ENCODE measurements at regions of chr1 and their contacts with region 1.

Region 1: DNA sequence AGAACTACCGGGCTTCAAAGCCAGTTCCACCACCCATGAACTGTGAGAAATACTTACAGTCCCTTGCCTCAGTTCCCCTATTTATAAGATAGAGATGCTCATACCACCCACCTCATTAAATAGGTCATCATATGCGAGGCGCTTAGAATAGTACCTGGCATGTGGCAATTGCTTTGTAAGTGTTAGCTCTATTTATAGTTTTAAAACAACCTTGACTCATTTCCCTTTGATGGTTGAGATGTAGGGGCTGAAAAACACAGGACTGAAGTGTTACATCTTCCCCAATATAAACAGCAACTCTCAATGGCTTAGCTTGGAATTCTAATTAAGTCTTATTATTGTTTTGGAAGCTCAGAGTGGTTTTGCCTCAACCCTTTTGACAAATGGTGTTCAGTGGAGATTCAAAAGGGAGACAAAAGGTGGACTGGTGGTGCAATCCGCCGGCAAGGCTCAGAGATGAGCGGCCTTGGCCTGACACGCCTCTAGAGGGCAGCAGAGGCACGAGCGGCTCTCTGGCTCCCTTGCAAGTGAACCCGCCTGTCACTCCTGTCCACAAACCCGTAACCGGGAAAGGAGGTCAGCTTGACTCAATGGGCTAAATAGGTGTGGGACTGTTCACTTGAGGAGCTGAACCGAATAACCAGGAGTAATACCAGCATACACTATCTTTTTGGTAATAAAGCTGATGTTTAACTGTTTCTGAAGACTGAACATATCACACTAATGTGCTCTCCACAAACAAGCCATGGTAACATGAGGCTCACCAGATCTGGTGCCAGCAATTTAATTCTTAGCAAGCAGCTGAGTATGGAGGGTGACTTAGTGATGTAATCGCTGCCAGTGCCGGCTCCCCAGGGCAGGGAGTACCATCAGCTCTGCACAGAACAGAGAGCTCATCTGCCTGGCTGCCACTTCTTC is 19.5 kb upstream of the SMYD2 start:
- DNase-seq: peak; percentile 53 to 79
- ATAC-seq: peak; percentile 96 to 99
- H3K4me3 ChIP-seq: no peak overlapping the region
- H3K27ac ChIP-seq: 0 out of 6 replicates have a peak overlapping the region, but pooled peaks of 1 of the 2 experiments have one; percentile 39
- H3K4me1 ChIP-seq: peaks cover 13% of the 10 kb centered on the region; the same call in 2 of the 3 replicates
- CTCF ChIP-seq: peak; percentile 90
- EP300 ChIP-seq: no peak
- POLR2A ChIP-seq: no peak
- RAD21 ChIP-seq: peak; percentile 84 to 86

Region 2: DNA sequence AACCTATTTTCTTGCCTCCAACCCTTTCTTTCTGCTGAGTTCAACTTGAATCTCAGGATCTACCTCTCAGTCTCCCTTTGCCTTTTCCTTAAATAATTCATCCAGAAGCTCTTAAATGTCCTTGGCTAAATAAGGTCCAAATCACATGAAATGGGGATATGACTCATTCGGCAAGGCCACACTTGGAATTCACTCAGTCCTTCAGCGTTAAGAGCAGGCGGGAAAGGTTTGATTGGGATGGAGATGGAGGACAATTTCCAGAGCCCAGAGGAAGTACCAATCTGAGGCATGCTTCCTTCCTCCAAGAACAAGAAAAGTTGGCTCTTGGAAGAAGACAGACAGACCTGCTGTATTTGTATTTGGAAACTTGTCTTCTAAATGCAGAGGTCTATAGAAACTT is 145.2 kb before region 1 on chr1:
- CTCF ChIA-PET with region 1: no interaction called
- POLR2A ChIA-PET with region 1: no interaction called
- DNase-seq: no peak
- ATAC-seq: no peak
- H3K4me3 ChIP-seq: no peak overlapping the region
- H3K27ac ChIP-seq: no peak overlapping the region
- H3K4me1 ChIP-seq: no peaks in the 10 kb centered on the region
- CTCF ChIP-seq: no peak
- EP300 ChIP-seq: no peak
- POLR2A ChIP-seq: no peak
- RAD21 ChIP-seq: no peak

Region 3: DNA sequence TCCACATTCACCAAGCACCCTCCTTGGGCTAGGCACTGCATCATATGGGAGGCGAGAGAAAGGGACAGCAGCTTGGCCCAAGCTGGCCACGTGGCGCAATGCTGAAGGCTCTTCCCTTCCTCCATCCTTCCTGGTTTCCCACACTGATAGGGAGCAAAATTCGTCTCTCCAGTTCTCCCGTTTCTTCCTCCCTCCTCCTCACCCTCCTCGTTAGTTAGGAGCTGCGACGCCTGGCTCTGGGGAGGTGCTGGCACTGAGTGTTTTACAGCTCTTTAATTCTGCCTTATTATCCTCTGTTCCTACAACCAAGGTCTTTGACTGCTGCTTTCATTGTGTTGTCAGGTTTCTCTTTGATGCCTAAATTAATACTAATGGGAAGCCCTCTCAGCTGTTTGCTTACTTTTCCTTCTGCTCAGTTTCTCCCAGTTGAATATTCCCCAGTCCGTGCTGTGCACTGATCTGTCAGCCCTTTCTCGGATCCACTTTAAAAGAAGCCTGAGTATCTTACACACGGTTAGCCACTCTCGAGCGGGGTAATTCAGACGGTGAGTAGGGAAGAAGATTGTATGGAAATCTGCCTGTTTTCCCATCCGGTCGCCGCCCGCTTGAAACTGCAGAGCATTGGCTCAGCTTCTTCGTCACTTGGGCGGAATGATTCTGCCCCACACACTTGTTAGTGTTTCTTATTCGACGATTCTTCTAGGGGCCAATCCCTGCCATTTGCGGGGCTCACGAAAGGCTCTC is 36.7 kb before region 1 on chr1:
- CTCF ChIA-PET with region 1: interaction called, 30 read pairs
- POLR2A ChIA-PET with region 1: no interaction called
- DNase-seq: no peak
- ATAC-seq: no peak
- H3K4me3 ChIP-seq: no peak overlapping the region
- H3K27ac ChIP-seq: no peak overlapping the region
- H3K4me1 ChIP-seq: peaks cover 12% of the 10 kb centered on the region
- CTCF ChIP-seq: no peak
- EP300 ChIP-seq: no peak
- POLR2A ChIP-seq: no peak
- RAD21 ChIP-seq: no peak

Region 4: GRCh38 chr1:214281021-214281719 is 19.7 kb after region 1 on chr1 and contains the start of gene SMYD2:
- CTCF ChIA-PET with region 1: interaction called, 70 read pairs
- POLR2A ChIA-PET with region 1: no interaction called
- DNase-seq: peak; percentile 53 to 66
- ATAC-seq: peak; percentile 83 to 86
- H3K4me3 ChIP-seq: peak within 1 kb of the TSS; percentile 90
- H3K27ac ChIP-seq: peak within 1 kb of the TSS; percentile 98 to 99
- H3K4me1 ChIP-seq: peaks cover 22% of the 10 kb centered on the region
- CTCF ChIP-seq: no peak
- EP300 ChIP-seq: no peak
- POLR2A ChIP-seq: peak; percentile 36
- RAD21 ChIP-seq: no peak
- polyA plus RNA-seq, gene SMYD2: 54.9 and 57.7 TPM in 2 replicates

Region 5: DNA sequence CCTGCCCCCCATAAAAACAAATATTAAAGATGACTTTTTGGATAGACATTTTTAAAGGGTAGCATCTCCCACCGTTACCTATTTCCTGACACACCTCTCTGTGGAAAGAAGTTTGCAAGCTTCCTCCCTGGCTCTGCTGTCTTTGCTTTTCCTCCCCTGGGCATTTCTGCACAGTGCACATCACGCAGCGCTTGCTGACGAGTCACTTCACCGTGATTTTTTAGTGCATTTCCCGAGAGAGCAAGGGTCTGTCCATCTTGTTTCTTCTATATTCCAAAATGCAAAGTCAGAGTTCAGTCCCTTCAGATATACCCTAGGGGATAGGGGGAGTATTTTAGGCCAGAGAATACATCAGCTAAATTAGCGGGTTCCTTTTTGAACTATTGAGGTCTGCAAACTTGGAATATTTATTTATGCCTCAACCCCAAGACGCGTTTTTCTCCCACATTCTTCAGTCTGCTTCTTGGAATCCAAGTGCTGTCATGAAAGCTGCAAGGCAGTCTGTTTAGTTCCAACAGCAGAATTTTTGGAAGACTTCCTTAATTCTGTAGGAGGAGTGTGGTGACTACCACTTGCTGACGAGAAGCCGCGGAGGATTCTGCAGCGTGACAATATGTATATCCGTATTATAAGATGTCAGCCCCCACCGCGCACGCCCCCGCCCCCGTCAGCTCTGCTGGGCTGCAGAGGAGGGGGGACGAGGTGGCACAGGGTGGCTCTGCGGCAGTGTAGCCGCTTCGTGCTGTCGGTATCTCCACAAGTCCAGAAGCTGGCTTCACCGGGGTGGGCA is 41.9 kb after region 1 on chr1:
- CTCF ChIA-PET with region 1: interaction called, 16 read pairs
- POLR2A ChIA-PET with region 1: no interaction called
- DNase-seq: no peak
- ATAC-seq: no peak
- H3K4me3 ChIP-seq: no peak overlapping the region
- H3K27ac ChIP-seq: no peak overlapping the region
- H3K4me1 ChIP-seq: no peaks in the 10 kb centered on the region
- CTCF ChIP-seq: no peak
- EP300 ChIP-seq: no peak
- POLR2A ChIP-seq: no peak
- RAD21 ChIP-seq: no peak

Region 6: DNA sequence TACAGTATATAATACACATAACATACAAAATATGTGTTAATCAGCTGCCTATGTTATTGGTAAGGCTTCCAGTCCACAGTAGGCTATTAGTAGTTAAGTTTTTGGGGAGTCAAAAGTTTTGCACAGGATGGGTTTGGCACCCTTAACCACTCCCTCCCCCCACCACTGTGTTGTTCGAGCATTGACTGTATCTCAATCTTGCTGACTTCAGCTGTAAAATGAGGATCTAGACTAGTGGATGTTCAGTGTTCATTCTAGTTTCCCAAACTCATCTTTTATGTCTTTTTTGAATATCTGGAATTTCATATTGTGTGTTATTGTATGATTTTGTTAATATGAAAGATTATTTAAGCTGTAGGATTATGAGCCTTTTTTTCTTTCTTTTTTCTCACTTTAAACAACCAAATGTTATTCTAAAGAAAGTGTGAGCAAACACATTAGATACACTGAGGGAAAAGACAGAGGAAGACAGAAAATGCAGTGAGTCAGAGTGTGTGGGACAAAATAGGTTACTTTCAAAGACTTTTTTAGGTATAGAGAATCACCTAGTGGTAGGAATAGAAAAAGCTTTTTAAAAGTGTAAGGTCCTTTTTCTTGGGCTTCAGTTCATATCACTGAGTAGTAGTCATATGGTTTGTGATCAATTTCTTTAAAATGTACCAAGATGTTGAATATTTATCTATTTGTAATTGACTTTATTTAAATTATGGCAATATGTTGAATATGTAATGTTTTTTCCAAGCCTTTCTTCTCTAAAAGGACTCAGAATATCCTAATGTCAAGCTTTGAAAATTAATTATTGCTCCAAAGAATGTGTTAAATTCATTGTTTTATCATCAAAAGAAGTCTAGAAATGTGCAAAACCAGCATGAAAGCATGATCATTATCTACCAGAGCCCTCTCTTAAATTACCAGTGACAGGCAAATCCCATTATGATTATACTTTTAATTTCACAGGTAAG is 323.6 kb after region 1 on chr1:
- CTCF ChIA-PET with region 1: interaction called, 10 read pairs
- POLR2A ChIA-PET with region 1: no interaction called
- DNase-seq: peak; percentile 41 to 58
- ATAC-seq: peak; percentile 83 to 89
- H3K4me3 ChIP-seq: no peak overlapping the region
- H3K27ac ChIP-seq: peak overlapping the region; percentile 31 to 74; a peak in 4 of 6 replicates
- H3K4me1 ChIP-seq: peaks cover 38% of the 10 kb centered on the region
- CTCF ChIP-seq: peak; percentile 97
- EP300 ChIP-seq: no peak
- POLR2A ChIP-seq: no peak
- RAD21 ChIP-seq: peak; percentile 97

Measured in A549 (cell line).